Esophagus muscularis mucosa (tissue), 4 donors: ENCODE measurements at regions of chr2 and their contacts with region 1.

Region 1: GRCh38 chr2:14634201-14634884 is 1.8 kb downstream of the LRATD1 start:
- DNase-seq: no peak
- H3K4me3 ChIP-seq: peak overlapping the region; percentile 60 to 69 (median 62)
- H3K27ac ChIP-seq: peak overlapping the region; percentile 81 to 92 (median 88)
- H3K4me1 ChIP-seq: peaks cover 23 to 54% (median 43%) of the 10 kb centered on the region in 4 donors
- H3K27me3 ChIP-seq: peaks cover 0 to 35% (median 0%) of the 10 kb centered on the region in 4 donors
- CTCF ChIP-seq: peak; percentile 51 to 86 (median 66)
- EP300 ChIP-seq: no peak
- POLR2A ChIP-seq: no peak

Region 2: GRCh38 chr2:14428056-14428455 is 206.3 kb before region 1 on chr2:
- intact Hi-C with region 1: loop called (anchors 5 kb)
- DNase-seq: no peak
- H3K4me3 ChIP-seq: no peak overlapping the region
- H3K27ac ChIP-seq: peak overlapping the region in 3 of 4 donors; percentile 6 to 30 (median 7)
- H3K4me1 ChIP-seq: peaks cover 0 to 18% (median 8%) of the 10 kb centered on the region in 4 donors
- H3K27me3 ChIP-seq: no peaks in the 10 kb centered on the region
- CTCF ChIP-seq: peak in 2 of 3 experiments; percentile 23 to 41
- EP300 ChIP-seq: no peak
- POLR2A ChIP-seq: no peak

Region 3: DNA sequence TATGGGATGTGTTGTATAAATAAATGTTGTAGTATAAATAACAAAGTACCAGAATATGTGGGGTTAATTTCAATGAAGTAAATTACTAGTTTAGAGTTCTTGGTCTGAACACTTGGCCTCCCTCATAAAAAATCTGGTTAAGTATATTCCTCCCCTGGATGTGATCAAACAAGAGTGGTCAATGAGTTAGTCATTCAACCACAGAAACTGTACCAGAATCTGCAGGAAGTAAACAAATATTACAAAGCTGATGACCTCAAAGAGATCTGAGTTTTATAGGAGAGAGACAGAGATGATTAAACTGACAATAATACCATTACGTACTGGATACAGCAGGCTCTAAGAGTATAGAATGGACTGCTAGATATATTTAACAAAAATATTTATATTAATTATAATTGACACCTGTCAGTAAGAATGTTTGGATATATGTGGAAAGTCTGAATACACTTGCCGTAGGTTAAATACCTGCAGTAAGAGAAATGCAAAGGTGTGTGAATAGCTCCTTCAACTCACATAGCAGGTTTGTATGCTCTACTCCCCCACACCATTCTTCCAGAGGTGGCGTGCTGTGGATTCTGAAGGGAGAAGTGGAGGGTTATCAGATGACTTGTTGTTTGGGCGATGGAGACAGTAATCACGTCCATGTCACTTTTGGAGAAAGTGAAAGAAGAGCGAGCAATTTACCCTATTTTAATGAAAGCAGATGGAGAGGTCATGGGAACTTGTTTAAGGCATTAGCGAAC is 110.1 kb before region 1 on chr2:
- intact Hi-C with region 1: no loop called
- DNase-seq: peak; percentile 17
- H3K4me3 ChIP-seq: no peak overlapping the region
- H3K27ac ChIP-seq: no peak overlapping the region
- H3K4me1 ChIP-seq: no peaks in the 10 kb centered on the region
- H3K27me3 ChIP-seq: no peaks in the 10 kb centered on the region
- CTCF ChIP-seq: no peak
- EP300 ChIP-seq: no peak
- POLR2A ChIP-seq: no peak

Region 4: GRCh38 chr2:15042801-15043217 is 408.5 kb after region 1 on chr2:
- intact Hi-C with region 1: loop called (anchors 10 kb)
- DNase-seq: no peak
- H3K4me3 ChIP-seq: no peak overlapping the region
- H3K27ac ChIP-seq: peak overlapping the region; percentile 73 to 75 (median 74)
- H3K4me1 ChIP-seq: peaks cover 0 to 57% (median 45%) of the 10 kb centered on the region in 4 donors
- H3K27me3 ChIP-seq: no peaks in the 10 kb centered on the region
- CTCF ChIP-seq: no peak
- EP300 ChIP-seq: no peak
- POLR2A ChIP-seq: no peak